AG04450 (cell line): ENCODE measurements at regions of chr11 and their contacts with region 1.

Region 1: DNA sequence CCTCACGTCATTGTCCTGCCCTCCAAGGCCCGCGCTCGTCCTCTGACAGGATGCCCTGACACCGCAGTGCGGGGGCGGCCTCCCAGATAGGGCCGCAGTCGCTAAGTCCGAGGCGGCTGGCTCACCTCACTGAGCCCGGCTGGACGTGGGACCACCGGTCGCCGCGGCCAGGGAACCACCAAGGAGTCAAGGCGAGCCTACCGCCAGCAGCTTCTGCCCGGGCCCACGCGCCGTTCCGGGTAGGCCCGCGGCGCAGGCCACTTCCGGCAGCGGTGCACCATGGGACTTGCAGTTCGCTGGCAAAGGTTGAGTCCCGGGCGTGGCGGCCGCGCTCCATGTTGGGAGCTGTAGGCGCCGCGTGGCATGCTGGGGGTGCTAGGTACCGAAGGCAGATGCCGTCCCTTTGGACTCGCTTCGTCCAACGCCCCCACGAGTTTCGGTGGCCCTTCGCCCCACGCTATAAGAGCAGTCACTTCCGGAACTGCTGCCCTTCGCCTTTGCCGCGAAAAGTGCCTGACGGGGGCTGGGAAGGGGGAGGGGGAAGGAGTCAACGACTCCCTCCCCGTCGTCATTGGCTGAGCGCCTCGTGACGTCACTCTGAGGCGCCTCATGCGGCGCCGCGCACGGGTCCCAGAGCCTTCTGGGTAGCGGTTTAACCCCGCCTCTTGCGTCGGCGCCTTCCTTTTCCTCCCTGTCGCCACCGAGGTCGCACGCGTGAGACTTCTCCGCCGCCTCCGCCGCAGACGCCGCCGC is at the start of gene RPLP2:
- DNase-seq: peak; percentile 89
- H3K4me3 ChIP-seq: peak within 1 kb of the TSS; percentile 69
- H3K27ac ChIP-seq: peak within 1 kb of the TSS; percentile 99
- H3K27me3 ChIP-seq: no peaks in the 10 kb centered on the region
- CTCF ChIP-seq: no peak
- polyA plus RNA-seq, gene RPLP2: 940 and 1,115 TPM in 2 replicates

Region 2: GRCh38 chr11:797296-798092 is 12.0 kb before region 1 on chr11:
- CTCF ChIA-PET with region 1: no interaction called
- POLR2A ChIA-PET with region 1: interaction called, 18 read pairs
- DNase-seq: peak; percentile 53
- H3K4me3 ChIP-seq: peak overlapping the region; percentile 78
- H3K27ac ChIP-seq: peak overlapping the region; percentile 85
- H3K27me3 ChIP-seq: no peaks in the 10 kb centered on the region
- CTCF ChIP-seq: no peak

Region 3: GRCh38 chr11:832321-833113 is 23.1 kb after region 1 on chr11 and contains the start of gene CD151:
- CTCF ChIA-PET with region 1: no interaction called
- POLR2A ChIA-PET with region 1: interaction called, 12 read pairs
- DNase-seq: no peak
- H3K4me3 ChIP-seq: peak within 1 kb of the TSS; percentile 77
- H3K27ac ChIP-seq: peak within 1 kb of the TSS; percentile 57
- H3K27me3 ChIP-seq: no peaks in the 10 kb centered on the region
- CTCF ChIP-seq: no peak
- polyA plus RNA-seq, gene CD151: 559 and 909 TPM in 2 replicates

Region 4: GRCh38 chr11:842370-843002 is 33.0 kb after region 1 on chr11 and contains the starts of genes POLR2L and TSPAN4:
- CTCF ChIA-PET with region 1: interaction called, 3 read pairs
- POLR2A ChIA-PET with region 1: interaction called, 12 read pairs
- DNase-seq: peak; percentile 68
- H3K4me3 ChIP-seq: peak within 1 kb of the TSS; percentile 71
- H3K27ac ChIP-seq: peak within 1 kb of the TSS; percentile 97
- H3K27me3 ChIP-seq: no peaks in the 10 kb centered on the region
- CTCF ChIP-seq: no peak
- polyA plus RNA-seq, gene POLR2L: 211 and 431 TPM in 2 replicates
- polyA plus RNA-seq, gene TSPAN4: 92.6 and 134 TPM in 2 replicates

Region 5: DNA sequence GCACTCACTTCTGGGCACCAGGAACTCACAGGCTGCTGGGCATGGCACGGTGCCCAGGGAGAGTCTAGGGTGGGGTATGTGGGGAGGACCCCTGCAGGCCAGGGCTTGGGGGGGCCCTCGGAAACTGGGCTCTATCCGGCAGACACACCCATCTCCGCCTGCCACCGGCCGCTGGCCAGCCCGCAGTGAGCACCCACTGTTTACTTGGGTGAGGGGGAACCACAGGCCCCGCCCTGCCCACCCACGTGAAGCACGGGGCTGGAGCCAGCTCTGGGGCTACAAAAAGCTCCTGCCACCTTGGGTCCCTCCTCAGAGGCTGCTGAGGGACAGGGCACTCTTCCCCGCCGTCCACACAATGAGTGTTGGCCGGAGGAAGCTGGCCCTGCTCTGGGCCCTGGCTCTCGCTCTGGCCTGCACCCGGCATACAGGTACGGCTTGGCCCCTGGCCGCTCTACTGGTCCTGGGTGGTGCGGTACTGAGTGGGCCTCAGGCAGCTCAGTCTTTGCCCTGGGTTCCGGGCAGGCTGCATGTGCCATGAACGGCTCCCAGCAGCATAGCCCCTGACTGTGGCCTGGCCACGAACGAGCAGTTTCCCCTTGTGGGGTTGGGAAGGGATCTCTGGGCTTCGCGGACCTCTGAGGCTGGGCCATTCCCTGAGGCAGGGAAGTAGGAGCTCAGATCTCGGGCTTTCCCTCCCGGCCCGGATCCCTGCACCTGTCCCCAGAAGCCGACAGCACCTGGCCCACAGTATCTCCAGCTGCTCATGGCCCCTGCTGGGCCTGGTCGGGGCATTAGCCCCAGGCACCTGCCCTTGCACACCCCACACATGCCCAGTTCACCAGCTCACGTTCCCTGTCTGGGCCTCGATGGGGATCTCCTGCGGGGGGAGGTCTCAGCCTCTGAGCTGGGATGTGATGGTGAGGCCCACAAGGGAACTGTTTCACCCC is 348.5 kb after region 1 on chr11 and contains the start of gene MUC5AC:
- CTCF ChIA-PET with region 1: no interaction called
- POLR2A ChIA-PET with region 1: no interaction called
- DNase-seq: no peak
- H3K4me3 ChIP-seq: no peak within 1 kb of the TSS
- H3K27ac ChIP-seq: no peak within 1 kb of the TSS
- H3K27me3 ChIP-seq: peaks cover 4% of the 10 kb centered on the region
- CTCF ChIP-seq: no peak
- polyA plus RNA-seq, gene MUC5AC: under 0.01 and 0.01 TPM in 2 replicates